GM13977 (cell line): ENCODE measurements at regions of chr9 and their contacts with region 1.

Region 1: DNA sequence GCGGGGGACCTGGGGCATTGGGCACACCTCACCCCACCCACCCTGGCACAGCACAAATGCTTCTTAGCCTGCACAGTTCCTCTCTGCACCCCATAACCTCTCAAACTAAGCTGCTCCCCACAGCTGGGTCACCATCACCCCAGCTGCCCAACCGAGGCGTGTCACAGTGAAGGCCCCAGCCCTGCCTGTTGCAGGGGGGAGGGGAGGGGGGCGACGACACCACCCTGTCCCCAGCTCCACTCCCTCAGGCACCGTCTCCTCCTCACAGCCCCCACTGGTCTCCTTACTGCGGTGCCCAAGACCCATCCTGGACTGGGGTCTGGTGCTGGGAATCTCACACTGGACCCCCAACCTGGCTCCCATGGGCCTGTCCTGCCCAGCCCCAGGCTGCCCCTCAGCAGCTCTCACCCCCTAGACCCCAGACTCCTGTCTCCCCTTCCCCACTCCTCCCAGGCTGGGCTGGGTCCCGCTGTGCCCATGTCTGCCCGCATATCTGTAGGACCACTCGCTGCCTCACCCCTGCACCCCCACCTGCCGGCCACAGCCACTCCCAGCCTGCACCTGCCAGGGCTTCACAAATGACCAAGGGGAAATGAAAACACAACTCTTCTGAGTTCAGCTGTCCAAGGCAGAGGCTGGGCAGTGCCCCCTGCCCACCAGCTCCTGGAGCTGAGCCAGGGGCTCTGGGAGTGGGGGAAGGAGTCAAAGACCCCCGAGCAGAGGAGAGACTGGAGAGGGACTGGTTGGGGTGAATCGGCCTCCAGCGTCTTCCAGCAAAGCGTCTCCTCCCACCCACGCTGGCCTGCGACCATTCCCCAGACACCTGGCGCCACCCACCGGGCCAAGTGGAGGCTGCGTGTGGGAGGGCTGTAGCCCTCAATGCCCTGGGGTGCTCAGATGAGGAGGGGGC is 32.7 kb upstream of the EGFL7 start:
- DNase-seq: peak; percentile 84
- CTCF ChIP-seq: peak; percentile 87

Region 2: DNA sequence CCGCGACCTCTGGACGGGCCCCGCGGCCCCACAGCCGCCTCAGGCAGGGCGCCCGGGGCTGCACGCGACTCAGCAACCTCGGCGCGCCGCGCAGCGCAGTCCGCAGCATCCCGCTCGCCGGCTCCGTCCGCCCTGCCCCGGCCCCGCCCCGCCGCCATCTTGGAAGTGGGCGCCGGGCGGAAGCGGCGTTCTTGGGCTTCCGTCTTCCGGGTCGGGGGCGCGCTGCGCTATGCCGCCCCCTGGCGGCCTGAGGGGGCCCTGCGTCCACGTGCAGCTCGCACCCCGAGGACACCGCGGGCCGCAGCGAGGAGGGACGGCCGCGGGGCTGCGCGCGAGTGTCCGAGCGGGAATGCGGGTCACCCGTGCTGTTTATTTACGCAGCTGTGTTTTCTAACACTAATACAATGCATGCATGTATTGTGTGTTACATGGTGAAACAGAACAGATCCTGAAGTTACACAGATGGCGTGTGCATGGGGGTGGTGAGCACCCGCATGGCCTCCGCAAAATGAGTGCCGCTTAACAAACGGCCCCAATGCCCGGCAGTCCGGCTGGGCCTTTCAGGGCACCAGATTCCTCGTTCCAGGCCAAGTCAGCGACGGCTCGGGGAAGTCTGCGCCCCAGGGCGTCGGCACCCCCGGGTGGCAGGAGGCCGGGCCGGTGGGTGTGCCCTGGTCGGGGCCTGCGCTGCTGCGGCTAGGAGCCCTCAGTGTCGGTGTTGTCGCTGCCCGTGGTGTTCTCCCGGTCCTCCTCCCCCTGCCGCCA is 266.2 kb before region 1 on chr9 and contains the start of gene DNLZ:
- in situ Hi-C with region 1: no loop called
- DNase-seq: peak; percentile 99
- CTCF ChIP-seq: peak; percentile 98

Region 3: DNA sequence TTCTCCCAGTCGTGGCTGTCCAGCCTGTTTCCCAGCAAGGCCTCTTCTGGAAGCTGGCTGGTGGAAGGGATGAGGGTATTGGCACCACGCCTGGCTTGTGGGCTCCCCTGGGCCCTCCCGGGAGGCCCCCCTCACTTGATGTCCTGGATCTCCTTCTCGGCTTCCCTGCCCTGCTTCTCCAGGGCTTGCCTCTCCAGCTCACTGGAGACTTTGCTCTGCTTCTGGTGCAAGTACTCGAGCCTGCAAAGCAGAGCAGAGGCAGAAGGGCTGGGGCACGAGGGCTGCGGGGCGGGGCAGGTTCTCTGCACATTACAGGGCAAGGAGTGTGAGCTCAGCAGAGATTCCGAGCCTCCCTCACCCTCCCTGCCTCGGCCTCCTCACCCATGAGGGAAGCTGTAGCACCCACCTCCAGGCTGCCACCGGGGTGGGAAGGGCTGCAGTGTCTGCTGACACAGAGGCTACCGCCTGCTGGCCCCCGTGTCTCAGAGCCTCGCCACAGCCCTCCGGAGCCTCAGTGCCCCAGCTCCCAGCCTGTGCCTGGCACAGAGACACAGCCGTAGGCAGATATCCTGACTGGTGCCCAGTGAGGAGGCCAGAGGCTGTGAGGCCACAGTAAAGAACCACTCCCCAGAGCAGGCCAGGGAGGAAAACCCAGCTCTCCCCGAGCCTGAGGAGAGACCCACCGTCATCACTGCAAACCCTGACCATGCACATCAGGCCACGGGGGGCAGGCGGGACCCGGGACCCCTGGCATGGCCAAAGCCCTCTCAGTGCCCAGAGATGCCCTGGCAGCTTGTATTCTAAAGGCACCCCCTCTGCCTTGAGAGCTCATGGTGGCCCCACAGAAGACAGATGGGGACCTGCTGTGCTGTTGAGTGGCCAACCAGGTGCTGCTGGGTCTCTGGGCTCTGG is 237.2 kb before region 1 on chr9:
- in situ Hi-C with region 1: no loop called
- DNase-seq: no peak
- CTCF ChIP-seq: no peak

Region 4: GRCh38 chr9:136493567-136493971 is 136.4 kb before region 1 on chr9:
- in situ Hi-C with region 1: loop called (anchors 5 kb)
- DNase-seq: no peak
- CTCF ChIP-seq: no peak

Region 5: DNA sequence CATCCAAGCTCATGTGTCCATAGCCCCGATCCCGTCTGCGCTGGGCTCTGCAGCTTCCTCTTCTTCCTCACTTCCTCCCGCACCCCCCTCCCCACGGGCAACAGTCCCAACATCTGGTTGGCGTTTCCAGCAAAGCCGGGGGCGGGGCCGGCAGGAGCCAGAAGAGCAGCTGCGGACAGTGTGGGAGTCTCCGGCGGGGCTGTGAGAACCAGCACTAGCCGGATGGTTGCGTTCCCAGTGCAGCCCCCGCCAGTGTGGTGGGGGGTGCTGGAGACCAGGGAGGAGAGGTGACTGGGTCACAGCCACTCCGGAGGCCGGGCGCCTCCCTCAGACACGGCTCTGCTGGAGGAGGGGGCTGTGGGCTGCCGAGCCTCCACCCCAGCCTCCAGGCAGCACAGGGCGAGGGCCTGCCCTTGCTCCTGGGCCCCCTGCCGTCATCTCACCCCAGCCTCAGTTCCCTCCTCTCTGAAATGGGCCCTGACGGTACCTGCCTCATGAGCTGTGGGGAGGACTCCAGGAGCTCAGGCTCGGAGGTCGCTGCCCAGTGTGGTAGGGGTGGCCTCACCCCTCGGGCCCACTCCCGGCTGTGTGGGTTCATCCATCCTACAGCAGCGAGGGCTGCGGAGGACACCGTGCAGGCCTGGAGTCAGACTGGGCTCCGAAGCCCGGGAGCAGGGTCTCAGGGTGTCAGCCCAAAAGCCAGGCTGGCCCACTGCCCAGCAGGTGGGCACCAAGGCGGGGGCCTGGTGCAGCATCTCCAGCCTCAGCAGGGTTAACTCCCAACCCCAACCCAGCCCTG is 42.7 kb before region 1 on chr9:
- in situ Hi-C with region 1: no loop called
- DNase-seq: no peak
- CTCF ChIP-seq: no peak